ENCODE measurements at regions of chr1 and their contacts with region 1.

Region 1: GRCh38 chr1:225474986-225475820 is 47.4 kb upstream of the LBR start:
- DNase-seq: peak; percentile 54
- ATAC-seq: peak; percentile 86
- H3K4me3 ChIP-seq: peak overlapping the region; percentile 36 to 72 (median 48)
- H3K27ac ChIP-seq: no peak overlapping the region
- H3K4me1 ChIP-seq: peaks cover 42% of the 10 kb centered on the region
- H3K27me3 ChIP-seq: peaks cover 1 to 7% of the 10 kb centered on the region in 2 experiments; a peak in 2 of 5 replicates
- CTCF ChIP-seq: peak; percentile 100
- EP300 ChIP-seq: peak in 1 of 2 experiments; percentile 32; a peak in 1 of 4 replicates
- POLR2A ChIP-seq: no peak
- RAD21 ChIP-seq: peak; percentile 100

Region 2: DNA sequence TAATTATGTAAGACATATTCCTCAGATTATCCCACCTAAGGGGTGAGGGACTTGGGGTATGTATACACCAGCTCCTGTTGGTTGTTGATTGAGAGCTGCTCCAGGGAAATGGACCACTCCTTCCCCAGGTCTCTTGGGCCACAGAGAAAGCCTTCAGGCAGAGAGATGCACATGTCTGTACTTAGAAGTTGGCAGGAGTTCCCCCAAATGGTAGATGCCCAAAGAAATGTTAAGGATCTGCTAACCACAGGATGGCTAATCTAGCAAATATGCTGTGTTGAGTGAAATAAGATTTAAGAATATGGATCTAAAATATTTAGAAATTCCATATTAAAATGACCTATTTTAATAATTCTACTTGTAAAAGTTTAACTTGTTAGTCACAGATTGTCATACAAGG is 646.5 kb before region 1 on chr1:
- CTCF ChIA-PET with region 1: no interaction called
- POLR2A ChIA-PET with region 1: no interaction called
- in situ Hi-C with region 1: no loop called
- intact Hi-C with region 1: no loop called
- DNase-seq: no peak
- ATAC-seq: no peak
- H3K4me3 ChIP-seq: no peak overlapping the region
- H3K27ac ChIP-seq: no peak overlapping the region
- H3K4me1 ChIP-seq: no peaks in the 10 kb centered on the region
- H3K27me3 ChIP-seq: no peaks in the 10 kb centered on the region
- CTCF ChIP-seq: no peak
- EP300 ChIP-seq: no peak
- POLR2A ChIP-seq: no peak
- RAD21 ChIP-seq: no peak

Region 3: GRCh38 chr1:225825607-225826007 is 350.4 kb after region 1 on chr1:
- CTCF ChIA-PET with region 1: no interaction called
- POLR2A ChIA-PET with region 1: no interaction called
- in situ Hi-C with region 1: loop called (anchors 5 kb)
- intact Hi-C with region 1: no loop called
- DNase-seq: no peak
- ATAC-seq: peak; percentile 26
- H3K4me3 ChIP-seq: peak overlapping the region in 1 of 3 experiments; percentile 41; a peak in 1 of 6 replicates
- H3K27ac ChIP-seq: peak overlapping the region; percentile 60
- H3K4me1 ChIP-seq: peaks cover 70% of the 10 kb centered on the region
- H3K27me3 ChIP-seq: no peaks in the 10 kb centered on the region
- CTCF ChIP-seq: no peak
- EP300 ChIP-seq: no peak
- POLR2A ChIP-seq: no peak
- RAD21 ChIP-seq: no peak

Region 4: DNA sequence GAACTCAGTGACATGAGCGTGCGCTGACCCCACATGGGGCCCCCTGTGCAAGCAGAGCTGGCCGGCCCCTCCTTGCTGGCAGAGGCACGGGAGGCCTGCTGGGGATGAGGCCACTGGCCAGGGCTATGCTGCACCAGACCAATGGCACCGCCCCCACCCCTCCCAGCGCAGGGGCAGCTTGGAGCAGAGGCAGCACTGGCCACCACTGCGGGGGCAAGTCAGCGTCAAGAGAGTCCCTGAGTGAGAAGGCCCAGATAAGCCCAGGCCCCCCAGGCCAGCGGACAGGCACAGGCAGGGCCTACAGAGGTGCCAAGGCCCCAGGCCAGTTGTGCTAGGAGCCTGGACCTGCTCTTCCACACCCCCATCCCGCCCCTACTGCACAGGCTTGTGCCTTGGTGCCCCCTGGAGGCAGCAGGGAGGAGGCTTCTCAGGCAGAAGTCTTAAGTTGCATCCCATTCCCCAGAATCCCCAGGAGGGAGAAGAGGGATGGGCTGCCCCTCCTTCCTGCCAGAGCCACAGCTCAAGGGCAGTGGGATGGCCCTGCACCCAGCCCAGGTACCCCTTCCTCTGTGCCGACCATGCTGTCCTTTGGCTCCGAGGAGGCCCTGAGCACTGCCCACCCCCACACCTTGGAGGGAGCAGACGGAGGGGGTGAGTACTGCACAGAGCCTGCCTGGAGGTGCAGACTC is 370.5 kb after region 1 on chr1:
- CTCF ChIA-PET with region 1: interaction called, 37 read pairs
- POLR2A ChIA-PET with region 1: no interaction called
- in situ Hi-C with region 1: no loop called
- intact Hi-C with region 1: loop called (anchors 2 kb)
- DNase-seq: peak; percentile 71
- ATAC-seq: peak; percentile 87
- H3K4me3 ChIP-seq: no peak overlapping the region
- H3K27ac ChIP-seq: no peak overlapping the region
- H3K4me1 ChIP-seq: no peaks in the 10 kb centered on the region
- H3K27me3 ChIP-seq: no peaks in the 10 kb centered on the region
- CTCF ChIP-seq: peak; percentile 93
- EP300 ChIP-seq: no peak
- POLR2A ChIP-seq: peak; percentile 19 to 29; a peak in 1 of 4 replicates
- RAD21 ChIP-seq: peak; percentile 91

Region 5: DNA sequence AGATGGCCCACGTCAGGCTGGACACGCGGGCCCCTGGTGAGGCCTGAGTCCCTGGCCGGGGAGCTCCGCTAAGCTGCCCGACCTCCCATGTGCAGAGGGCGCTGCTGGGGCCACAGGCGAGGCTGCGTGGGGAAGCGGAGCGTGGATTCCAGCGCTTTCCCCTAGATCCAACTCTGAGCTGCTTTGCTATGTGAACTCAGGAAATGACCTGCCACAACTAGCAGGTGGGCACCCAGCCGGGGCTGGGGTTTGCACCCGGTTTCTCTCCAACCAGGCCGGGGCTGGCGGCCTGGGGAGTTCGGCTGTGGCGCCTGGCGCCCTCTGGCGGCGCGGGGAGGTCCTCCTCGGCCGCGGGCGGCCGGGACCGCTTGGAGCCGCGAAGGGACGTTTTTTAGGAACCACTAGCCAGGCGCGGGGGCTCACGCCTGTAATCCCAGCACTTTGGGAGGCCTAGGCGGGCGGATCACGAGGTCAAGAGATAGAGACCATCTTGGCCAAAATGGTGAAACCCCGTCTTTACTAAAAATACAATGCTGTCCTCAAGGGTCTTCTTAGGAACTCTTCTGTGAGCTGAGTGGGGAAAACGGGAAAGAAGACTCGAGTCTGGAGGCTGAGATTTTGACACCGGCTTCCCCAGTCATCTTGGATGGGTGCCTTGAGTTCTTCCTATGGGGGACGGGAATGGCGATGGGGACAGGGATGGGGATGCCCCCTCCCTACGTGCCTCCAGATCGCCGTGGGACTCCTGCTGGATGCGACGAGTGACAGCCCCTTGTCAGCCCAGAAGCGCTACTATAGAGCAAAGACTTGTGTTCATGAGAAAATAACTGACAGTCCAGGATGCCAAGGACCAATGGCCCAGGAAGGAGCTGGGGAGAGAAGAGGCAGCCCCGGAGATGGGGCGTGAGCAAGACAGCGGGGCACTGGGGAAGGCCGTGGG is 436.3 kb after region 1 on chr1:
- CTCF ChIA-PET with region 1: interaction called, 53 read pairs
- POLR2A ChIA-PET with region 1: interaction called, 3 read pairs
- in situ Hi-C with region 1: loop called (anchors 5 kb)
- intact Hi-C with region 1: loop called (anchors 1 kb)
- DNase-seq: peak; percentile 17
- ATAC-seq: peak; percentile 88
- H3K4me3 ChIP-seq: peak overlapping the region in 1 of 3 experiments; percentile 39; a peak in 1 of 6 replicates
- H3K27ac ChIP-seq: no peak overlapping the region
- H3K4me1 ChIP-seq: peaks cover 26% of the 10 kb centered on the region
- H3K27me3 ChIP-seq: peaks cover 2 to 6% of the 10 kb centered on the region in 2 experiments; a peak in 4 of 5 replicates
- CTCF ChIP-seq: peak; percentile 78
- EP300 ChIP-seq: no peak
- POLR2A ChIP-seq: no peak
- RAD21 ChIP-seq: peak; percentile 95

Region 6: GRCh38 chr1:225977937-225978748 is 502.9 kb after region 1 on chr1:
- CTCF ChIA-PET with region 1: interaction called, 65 read pairs
- POLR2A ChIA-PET with region 1: no interaction called
- in situ Hi-C with region 1: loop called (anchors 5 kb)
- intact Hi-C with region 1: loop called (anchors 1 kb)
- DNase-seq: no peak
- ATAC-seq: no peak
- H3K4me3 ChIP-seq: no peak overlapping the region
- H3K27ac ChIP-seq: no peak overlapping the region
- H3K4me1 ChIP-seq: no peaks in the 10 kb centered on the region
- H3K27me3 ChIP-seq: no peaks in the 10 kb centered on the region
- CTCF ChIP-seq: no peak
- EP300 ChIP-seq: no peak
- POLR2A ChIP-seq: no peak
- RAD21 ChIP-seq: no peak

Region 7: DNA sequence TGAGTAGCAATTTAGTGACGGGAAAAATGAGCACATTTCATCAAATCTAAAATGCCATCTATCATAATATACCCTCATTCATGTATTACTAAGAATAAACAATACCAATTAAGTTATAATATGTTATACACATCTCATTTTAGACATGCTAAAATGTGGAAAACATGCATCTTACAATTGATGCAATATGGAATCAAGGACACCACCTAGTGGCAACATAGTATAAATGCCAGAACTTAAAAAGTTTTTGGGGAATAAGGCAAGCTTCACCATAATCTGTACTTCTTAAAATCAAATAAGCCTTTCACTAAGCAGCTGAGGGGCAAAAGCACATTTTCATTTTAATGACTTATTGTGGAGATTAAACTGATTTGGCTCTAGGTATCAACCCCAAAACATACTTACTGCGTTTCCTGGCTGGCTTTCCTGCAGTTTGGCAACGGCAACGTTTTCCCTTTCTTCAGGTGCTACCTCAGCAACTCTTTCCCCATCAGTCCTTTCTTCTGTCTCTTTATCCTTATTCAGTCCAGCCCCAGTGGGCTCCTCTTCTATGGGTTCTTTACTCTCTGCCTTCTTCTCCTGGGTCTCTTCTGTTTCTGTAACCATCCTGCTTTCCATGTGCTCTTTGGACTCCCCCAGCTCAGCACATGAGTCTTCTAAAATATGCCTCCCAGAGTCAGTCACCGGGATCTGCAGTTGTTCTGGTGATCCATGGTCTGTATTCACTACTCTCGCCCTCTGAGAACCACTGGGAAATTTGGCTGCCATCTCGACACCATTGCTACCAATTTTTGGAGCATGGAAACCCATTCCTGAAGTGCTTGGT is 512.5 kb after region 1 on chr1:
- CTCF ChIA-PET with region 1: interaction called, 26 read pairs
- POLR2A ChIA-PET with region 1: interaction called, 3 read pairs
- in situ Hi-C with region 1: no loop called
- intact Hi-C with region 1: no loop called
- DNase-seq: peak; percentile 28
- ATAC-seq: peak; percentile 68
- H3K4me3 ChIP-seq: no peak overlapping the region
- H3K27ac ChIP-seq: peak overlapping the region; percentile 3
- H3K4me1 ChIP-seq: peaks cover 12% of the 10 kb centered on the region
- H3K27me3 ChIP-seq: no peaks in the 10 kb centered on the region
- CTCF ChIP-seq: peak; percentile 61
- EP300 ChIP-seq: no peak
- POLR2A ChIP-seq: no peak
- RAD21 ChIP-seq: no peak

Measured in HepG2 (cell line).